Activated CD4-positive, alpha-beta T cell treated with anti-CD3 and anti-CD28 coated beads for 36 hours (primary cell): ENCODE measurements at regions of chr13 and their contacts with region 1.

Region 1: DNA sequence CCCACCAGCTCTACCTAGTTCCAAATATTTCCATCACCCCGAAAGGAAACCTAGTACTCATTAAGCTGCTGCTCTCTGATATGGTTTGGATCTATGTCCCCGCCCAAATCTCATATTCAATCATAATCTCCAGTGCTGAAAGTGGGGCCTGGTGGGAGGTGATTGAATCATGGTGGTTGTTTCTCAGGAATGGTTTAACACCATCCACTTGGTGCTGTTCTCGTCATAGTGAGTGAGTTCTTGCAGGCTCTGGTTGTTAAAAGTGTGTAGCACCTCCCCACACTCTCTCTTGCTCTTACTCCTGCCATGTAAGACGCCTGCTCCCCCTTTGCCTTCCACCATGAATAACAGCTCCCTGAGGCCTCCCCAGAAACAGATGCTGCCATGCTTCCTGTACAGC is 43.4 kb upstream of the MED4 start:
- DNase-seq: peak; percentile 58
- ATAC-seq: peak; percentile 98
- H3K4me3 Mint-ChIP-seq: no peak overlapping the region
- H3K27ac Mint-ChIP-seq: no peak overlapping the region
- H3K4me1 Mint-ChIP-seq: peaks cover 10% of the 10 kb centered on the region
- H3K27me3 Mint-ChIP-seq: no peaks in the 10 kb centered on the region

Region 2: GRCh38 chr13:48194379-48194754 is 56.1 kb after region 1 on chr13:
- CTCF ChIA-PET with region 1: no interaction called
- POLR2A ChIA-PET with region 1: interaction called, 12 read pairs
- intact Hi-C with region 1: no loop called
- DNase-seq: no peak
- ATAC-seq: no peak
- H3K4me3 Mint-ChIP-seq: no peak overlapping the region
- H3K27ac Mint-ChIP-seq: no peak overlapping the region
- H3K4me1 Mint-ChIP-seq: peaks cover 22% of the 10 kb centered on the region
- H3K27me3 Mint-ChIP-seq: no peaks in the 10 kb centered on the region

Region 3: DNA sequence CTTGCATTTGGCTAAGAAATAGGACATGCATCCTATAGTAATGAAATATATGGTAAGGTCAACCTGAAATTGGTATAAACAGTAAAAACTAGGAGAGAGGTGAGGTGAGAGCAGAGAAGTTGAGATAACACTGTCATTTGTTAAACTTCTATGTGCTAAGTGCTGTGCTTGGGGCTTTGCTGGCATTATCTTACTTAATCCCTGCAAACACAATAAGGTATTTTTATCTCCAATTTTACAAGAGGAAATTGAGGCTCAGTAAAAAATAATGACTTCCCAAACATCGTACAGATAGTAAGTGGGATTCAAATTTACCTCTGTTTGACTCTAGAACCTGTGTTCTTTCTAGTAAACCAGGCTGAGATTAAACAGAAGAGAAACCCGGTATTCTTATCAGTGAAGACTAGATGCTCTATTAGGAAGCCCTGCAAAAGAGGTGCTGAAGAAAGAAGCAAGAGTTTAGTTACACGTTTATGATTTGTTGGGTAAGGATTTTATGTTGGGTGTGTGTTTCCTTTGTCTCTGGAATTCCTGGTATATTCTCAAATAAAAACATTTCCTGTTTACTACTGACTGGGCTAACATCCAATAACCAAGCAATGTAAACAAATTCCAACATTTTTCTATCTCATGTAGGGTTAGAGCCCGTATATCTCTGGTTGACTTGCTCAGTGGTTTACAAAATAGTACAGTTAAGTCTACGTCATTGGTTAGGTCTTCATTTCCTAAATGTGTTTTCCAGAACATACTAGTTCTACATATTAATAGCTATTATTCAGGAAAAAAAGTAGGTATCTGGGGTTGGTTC is 700.1 kb after region 1 on chr13:
- CTCF ChIA-PET with region 1: no interaction called
- POLR2A ChIA-PET with region 1: no interaction called
- intact Hi-C with region 1: no loop called
- DNase-seq: no peak
- ATAC-seq: no peak
- H3K4me3 Mint-ChIP-seq: no peak overlapping the region
- H3K27ac Mint-ChIP-seq: no peak overlapping the region
- H3K4me1 Mint-ChIP-seq: no peaks in the 10 kb centered on the region
- H3K27me3 Mint-ChIP-seq: no peaks in the 10 kb centered on the region